A549 (cell line): ENCODE measurements at regions of chr12 and their contacts with region 1.

Region 1: DNA sequence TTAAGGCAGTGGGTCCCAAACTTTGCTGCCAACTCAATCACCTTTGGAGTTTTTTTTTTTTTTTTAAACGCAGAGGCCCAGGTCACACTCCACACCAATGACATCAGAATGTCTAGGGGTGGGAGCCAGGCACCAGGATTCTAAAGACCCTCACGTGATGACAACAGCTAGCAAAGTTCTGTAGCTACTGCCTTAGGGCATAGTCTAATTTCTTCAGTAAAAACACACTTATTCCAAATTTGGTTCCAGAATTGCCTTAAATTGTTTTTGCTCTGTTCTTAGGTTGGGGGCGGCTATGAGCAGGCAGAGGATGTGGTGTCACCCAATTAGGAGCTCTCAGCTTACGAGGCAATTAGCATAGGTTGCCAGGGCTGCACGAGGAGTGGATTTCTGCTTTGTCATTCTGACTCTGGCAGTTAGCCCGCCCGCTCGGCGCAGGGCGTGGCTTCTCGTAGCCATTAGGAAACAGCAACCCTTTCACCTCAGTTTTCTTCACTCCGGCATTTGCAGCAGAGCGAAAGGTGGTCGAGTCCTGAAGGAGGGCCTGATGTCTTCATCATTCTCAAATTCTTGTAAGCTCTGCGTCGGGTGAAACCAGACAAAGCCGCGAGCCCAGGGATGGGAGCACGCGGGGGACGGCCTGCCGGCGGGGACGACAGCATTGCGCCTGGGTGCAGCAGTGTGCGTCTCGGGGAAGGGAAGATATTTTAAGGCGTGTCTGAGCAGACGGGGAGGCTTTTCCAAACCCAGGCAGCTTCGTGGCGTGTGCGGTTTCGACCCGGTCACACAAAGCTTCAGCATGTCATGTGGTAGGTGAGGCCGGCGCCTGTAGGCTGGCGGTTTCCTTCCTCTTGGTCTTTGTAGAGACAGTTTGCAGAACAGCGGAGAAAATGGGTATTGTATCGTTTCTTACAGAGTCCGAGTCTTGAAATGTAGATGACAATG is 16.7 kb upstream of the EID3 start:
- DNase-seq: peak; percentile 83 to 99
- ATAC-seq: peak; percentile 63 to 76
- H3K4me3 ChIP-seq: peak overlapping the region; percentile 68
- H3K27ac ChIP-seq: peak overlapping the region; percentile 94 to 98
- H3K4me1 ChIP-seq: peaks cover 42% of the 10 kb centered on the region
- CTCF ChIP-seq: no peak
- EP300 ChIP-seq: peak; percentile 51 to 88; a peak in 4 of 5 replicates
- POLR2A ChIP-seq: peak; percentile 81
- RAD21 ChIP-seq: peak; percentile 2 to 8; a peak in 1 of 5 replicates

Region 2: GRCh38 chr12:104049903-104050356 is 236.9 kb before region 1 on chr12 and contains the start of gene GLT8D2:
- CTCF ChIA-PET with region 1: no interaction called
- POLR2A ChIA-PET with region 1: no interaction called
- DNase-seq: no peak
- ATAC-seq: peak; percentile 62 to 84; a peak in 5 of 6 replicates
- H3K4me3 ChIP-seq: peak within 1 kb of the TSS; percentile 33
- H3K27ac ChIP-seq: peak within 1 kb of the TSS in 1 of 2 experiments; percentile 25; a peak in 2 of 6 replicates
- H3K4me1 ChIP-seq: peaks cover 10% of the 10 kb centered on the region; the same call in 2 of the 3 replicates
- CTCF ChIP-seq: no peak
- EP300 ChIP-seq: no peak
- POLR2A ChIP-seq: no peak
- RAD21 ChIP-seq: no peak
- polyA plus RNA-seq, gene GLT8D2: 0.43 and 0.45 TPM in 2 replicates

Region 3: DNA sequence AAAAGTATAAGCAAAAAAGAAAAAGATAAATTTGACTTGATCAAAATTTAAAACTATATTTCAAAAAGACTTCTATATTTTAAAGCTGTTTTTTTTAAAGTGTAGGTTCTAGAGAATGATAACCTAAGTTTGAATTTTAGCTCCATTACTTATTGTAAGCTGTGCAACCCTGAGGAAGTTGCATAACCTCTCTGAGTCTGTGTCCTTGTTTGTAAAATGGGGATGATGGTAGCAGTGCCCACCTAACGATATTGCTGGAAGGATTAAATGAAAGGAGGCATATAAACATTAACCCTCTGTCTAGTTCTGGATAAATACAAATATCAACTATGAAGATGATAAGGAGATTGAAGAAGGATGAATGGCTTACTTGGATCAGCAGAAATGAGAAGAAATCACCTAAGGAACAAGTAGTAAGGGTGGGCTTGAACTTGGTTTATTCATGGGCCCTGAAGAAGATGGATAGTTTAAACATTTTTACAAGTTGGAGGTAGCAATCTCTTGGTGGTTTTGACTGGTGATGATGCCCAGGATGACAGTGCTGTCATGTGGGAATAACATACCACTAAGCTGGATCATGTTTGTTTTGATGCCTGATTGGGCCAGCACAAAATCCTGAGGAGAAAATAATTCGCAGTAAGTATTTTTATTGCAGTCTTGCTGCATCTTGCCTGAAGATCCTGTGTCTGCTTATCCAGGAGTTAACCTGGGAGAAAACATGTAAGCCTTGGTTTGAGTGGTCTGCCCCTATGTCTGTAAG is 36.3 kb before region 1 on chr12:
- CTCF ChIA-PET with region 1: no interaction called
- POLR2A ChIA-PET with region 1: interaction called, 13 read pairs
- DNase-seq: no peak
- ATAC-seq: peak; percentile 7 to 51; a peak in 3 of 6 replicates
- H3K4me3 ChIP-seq: no peak overlapping the region
- H3K27ac ChIP-seq: peak overlapping the region; percentile 65 to 72
- H3K4me1 ChIP-seq: peaks cover 40% of the 10 kb centered on the region
- CTCF ChIP-seq: no peak
- EP300 ChIP-seq: no peak
- POLR2A ChIP-seq: no peak
- RAD21 ChIP-seq: no peak

Region 4: DNA sequence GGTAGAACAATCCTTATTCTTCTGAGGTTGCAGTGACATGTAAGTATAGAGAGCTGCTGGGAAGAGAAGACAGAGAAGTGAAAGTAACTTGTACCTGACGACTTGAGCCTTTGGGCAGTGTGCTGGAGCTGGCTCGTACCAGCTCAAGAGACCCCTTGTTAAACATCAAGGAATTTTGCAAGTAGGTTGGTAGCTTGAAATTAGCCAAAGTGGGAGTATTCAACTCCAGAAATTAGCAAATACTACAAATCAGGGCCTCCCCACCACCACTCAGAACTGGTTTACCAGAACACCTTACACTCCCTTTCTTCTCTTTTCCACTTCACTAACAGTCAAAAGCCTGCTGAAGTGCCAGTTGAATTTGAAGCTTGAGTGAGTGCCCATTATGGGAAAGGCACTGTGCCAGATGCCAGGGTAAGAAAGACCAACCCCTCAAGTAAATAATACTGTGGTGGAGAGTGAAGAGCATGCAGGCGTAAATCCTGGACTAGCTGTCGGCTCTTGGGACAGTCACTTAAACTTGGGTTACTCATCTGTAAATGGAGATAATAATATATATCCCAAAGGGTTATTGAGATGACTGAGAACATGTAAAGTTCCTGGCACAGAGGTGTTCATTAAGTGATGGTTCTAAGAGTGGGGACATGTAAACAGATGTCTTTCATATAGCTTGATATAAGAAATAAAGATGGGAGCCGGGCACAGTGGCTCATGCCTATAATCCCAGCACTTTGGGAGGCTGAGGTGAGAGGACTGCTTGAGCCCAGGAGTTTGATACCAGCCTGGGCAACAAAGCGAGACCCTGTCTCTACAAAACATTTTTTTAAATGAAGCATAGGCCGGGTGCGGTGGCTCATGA is 10.3 kb before region 1 on chr12:
- CTCF ChIA-PET with region 1: interaction called, 29 read pairs
- POLR2A ChIA-PET with region 1: interaction called, 68 read pairs
- DNase-seq: peak in 1 of 2 experiments; percentile 64
- ATAC-seq: peak; percentile 25 to 32; a peak in 4 of 6 replicates
- H3K4me3 ChIP-seq: peak overlapping the region; percentile 25
- H3K27ac ChIP-seq: peak overlapping the region; percentile 85 to 98
- H3K4me1 ChIP-seq: peaks cover 72% of the 10 kb centered on the region
- CTCF ChIP-seq: no peak
- EP300 ChIP-seq: no peak
- POLR2A ChIP-seq: no peak
- RAD21 ChIP-seq: no peak

Region 5: GRCh38 chr12:104303538-104304151 is 16.8 kb after region 1 on chr12 and contains the start of gene EID3:
- CTCF ChIA-PET with region 1: interaction called, 47 read pairs
- POLR2A ChIA-PET with region 1: interaction called, 89 read pairs
- DNase-seq: peak; percentile 53 to 90
- ATAC-seq: peak; percentile 56 to 58
- H3K4me3 ChIP-seq: peak within 1 kb of the TSS; percentile 68
- H3K27ac ChIP-seq: peak within 1 kb of the TSS; percentile 73 to 98
- H3K4me1 ChIP-seq: peaks cover 81% of the 10 kb centered on the region
- CTCF ChIP-seq: no peak
- EP300 ChIP-seq: no peak
- POLR2A ChIP-seq: no peak
- RAD21 ChIP-seq: no peak
- polyA plus RNA-seq, gene EID3: 9.3 and 12.2 TPM in 2 replicates

Region 6: GRCh38 chr12:104309446-104309993 is 22.7 kb after region 1 on chr12:
- CTCF ChIA-PET with region 1: interaction called, 9 read pairs
- POLR2A ChIA-PET with region 1: interaction called, 89 read pairs
- DNase-seq: no peak
- ATAC-seq: peak; percentile 28 to 36; a peak in 5 of 6 replicates
- H3K4me3 ChIP-seq: peak overlapping the region; percentile 68; the same call in 2 of the 3 replicates
- H3K27ac ChIP-seq: peak overlapping the region; percentile 4 to 64
- H3K4me1 ChIP-seq: peaks cover 99% of the 10 kb centered on the region
- CTCF ChIP-seq: no peak
- EP300 ChIP-seq: no peak
- POLR2A ChIP-seq: no peak
- RAD21 ChIP-seq: no peak